Ovary (tissue), 10 donors: ENCODE measurements at regions of chr6 and their contacts with region 1.

Region 1: DNA sequence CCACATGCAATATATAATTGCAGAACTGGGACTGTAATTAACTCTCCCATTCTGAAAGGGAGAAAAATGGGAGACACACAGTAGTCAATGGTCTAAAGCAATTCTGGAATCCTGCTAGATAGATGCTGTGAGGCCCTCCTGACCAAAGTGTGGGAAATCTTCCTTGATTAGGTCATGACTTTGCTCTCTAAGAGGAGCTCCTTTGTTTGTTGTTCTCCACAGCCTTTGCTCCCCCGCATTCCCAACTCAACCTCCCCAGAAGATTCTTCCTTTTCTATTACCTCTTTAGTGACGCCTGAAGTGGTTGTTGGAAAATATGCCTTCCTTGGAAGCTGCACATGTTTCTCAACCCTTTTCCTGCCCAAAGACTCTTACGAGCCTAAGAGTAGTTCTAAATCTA is 28.8 kb upstream of the LIN28B start:
- DNase-seq: no peak
- H3K4me3 ChIP-seq: no peak overlapping the region
- H3K27ac ChIP-seq: no peak overlapping the region
- H3K4me1 ChIP-seq: no peaks in the 10 kb centered on the region
- H3K27me3 ChIP-seq: no peaks in the 10 kb centered on the region
- CTCF ChIP-seq: no peak
- EP300 ChIP-seq: no peak
- POLR2A ChIP-seq: no peak

Region 2: GRCh38 chr6:104286641-104287040 is 641.5 kb before region 1 on chr6:
- intact Hi-C with region 1: loop called in 1 of 4 experiments (anchors 5 kb)
- DNase-seq: no peak
- H3K4me3 ChIP-seq: no peak overlapping the region
- H3K27ac ChIP-seq: no peak overlapping the region
- H3K4me1 ChIP-seq: no peaks in the 10 kb centered on the region
- H3K27me3 ChIP-seq: no peaks in the 10 kb centered on the region
- CTCF ChIP-seq: no peak
- EP300 ChIP-seq: no peak
- POLR2A ChIP-seq: no peak